Endothelial cell of umbilical vein (primary cell): ENCODE measurements at regions of chr20 and their contacts with region 1.

Region 1: DNA sequence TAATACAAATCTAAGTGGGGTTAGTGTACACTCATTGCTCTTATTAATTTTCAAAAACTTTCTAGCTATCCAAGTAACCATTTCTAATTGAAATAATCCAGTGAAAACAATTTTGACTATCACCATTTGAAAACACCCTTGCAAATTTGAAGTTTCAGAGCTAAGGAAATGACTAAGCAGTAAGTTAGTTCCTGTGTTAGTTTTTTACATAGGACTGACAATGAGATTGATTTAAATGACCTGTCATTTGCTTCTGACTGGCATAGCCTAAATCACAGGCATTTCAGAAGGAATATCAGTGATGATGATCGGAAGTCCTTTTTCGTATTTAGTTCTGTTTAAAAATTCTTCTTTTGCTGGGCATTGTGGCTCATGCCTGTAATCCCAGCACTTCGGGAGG is 27.0 kb downstream of the STK4 start:
- DNase-seq: peak; percentile 65
- H3K4me3 ChIP-seq: peak overlapping the region in 1 of 3 experiments; percentile 23
- H3K27ac ChIP-seq: peak overlapping the region; percentile 82
- H3K4me1 ChIP-seq: peaks cover 17% of the 10 kb centered on the region
- H3K27me3 ChIP-seq: no peaks in the 10 kb centered on the region
- CTCF ChIP-seq: no peak
- POLR2A ChIP-seq: peak; percentile 26

Region 2: GRCh38 chr20:44966030-44966961 is 27.0 kb before region 1 on chr20 and contains the start of gene STK4:
- CTCF ChIA-PET with region 1: interaction called, 3 read pairs
- POLR2A ChIA-PET with region 1: no interaction called
- dilution Hi-C with region 1: no loop called
- intact Hi-C with region 1: loop called (anchors 2 kb)
- DNase-seq: peak; percentile 95
- H3K4me3 ChIP-seq: peak within 1 kb of the TSS; percentile 59 to 92 (median 64)
- H3K27ac ChIP-seq: peak within 1 kb of the TSS; percentile 44
- H3K4me1 ChIP-seq: peaks cover 50% of the 10 kb centered on the region
- H3K27me3 ChIP-seq: no peaks in the 10 kb centered on the region
- CTCF ChIP-seq: peak; percentile 46 to 67
- POLR2A ChIP-seq: peak; percentile 49
- total RNA-seq, gene STK4: 28.2 and 29.6 TPM in 2 replicates

Region 3: GRCh38 chr20:44976698-44977097 is 16.6 kb before region 1 on chr20:
- CTCF ChIA-PET with region 1: interaction called, 13 read pairs
- POLR2A ChIA-PET with region 1: no interaction called
- dilution Hi-C with region 1: no loop called
- intact Hi-C with region 1: no loop called
- DNase-seq: no peak
- H3K4me3 ChIP-seq: no peak overlapping the region
- H3K27ac ChIP-seq: no peak overlapping the region
- H3K4me1 ChIP-seq: peaks cover 8% of the 10 kb centered on the region
- H3K27me3 ChIP-seq: no peaks in the 10 kb centered on the region
- CTCF ChIP-seq: no peak
- POLR2A ChIP-seq: no peak

Region 4: DNA sequence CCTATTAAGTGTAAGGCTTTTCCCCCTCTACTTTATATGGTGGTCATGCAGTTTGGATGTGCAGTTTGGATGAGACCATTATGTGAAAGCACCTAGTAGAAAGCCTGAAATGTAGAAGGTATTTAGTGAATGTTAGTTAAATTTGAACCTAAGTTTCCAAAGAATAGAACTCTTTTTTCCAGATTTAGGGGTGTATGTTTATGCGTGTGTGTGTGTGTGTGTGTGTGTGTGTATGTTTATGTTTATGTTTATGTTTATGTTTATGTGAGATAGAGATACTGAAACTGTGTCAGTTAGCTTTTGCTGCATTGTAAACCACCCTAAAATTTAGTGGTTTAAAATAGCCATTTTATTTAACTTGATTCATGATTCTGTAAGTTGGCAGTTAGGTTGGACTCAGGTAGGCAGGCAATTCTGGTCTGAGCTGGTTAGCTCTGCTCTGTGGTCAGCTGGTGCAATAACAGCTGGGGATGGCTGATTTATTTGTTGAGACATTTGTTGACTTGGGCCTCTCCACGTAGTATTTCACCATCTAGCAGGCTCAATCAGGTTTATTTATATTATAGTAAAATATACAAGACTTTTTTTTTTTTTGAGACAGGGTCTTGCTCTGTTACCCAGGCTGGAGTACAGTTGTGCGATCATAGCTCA is 27.0 kb after region 1 on chr20:
- CTCF ChIA-PET with region 1: no interaction called
- POLR2A ChIA-PET with region 1: no interaction called
- dilution Hi-C with region 1: no loop called
- intact Hi-C with region 1: no loop called
- DNase-seq: no peak
- H3K4me3 ChIP-seq: no peak overlapping the region
- H3K27ac ChIP-seq: no peak overlapping the region
- H3K4me1 ChIP-seq: no peaks in the 10 kb centered on the region
- H3K27me3 ChIP-seq: no peaks in the 10 kb centered on the region
- CTCF ChIP-seq: no peak
- POLR2A ChIP-seq: no peak

Region 5: GRCh38 chr20:45080867-45081624 is 87.7 kb after region 1 on chr20:
- CTCF ChIA-PET with region 1: no interaction called
- POLR2A ChIA-PET with region 1: no interaction called
- dilution Hi-C with region 1: no loop called
- intact Hi-C with region 1: no loop called
- DNase-seq: peak; percentile 24
- H3K4me3 ChIP-seq: no peak overlapping the region
- H3K27ac ChIP-seq: no peak overlapping the region
- H3K4me1 ChIP-seq: peaks cover 2% of the 10 kb centered on the region
- H3K27me3 ChIP-seq: no peaks in the 10 kb centered on the region
- CTCF ChIP-seq: peak; percentile 23 to 50
- POLR2A ChIP-seq: no peak